Right cardiac atrium (tissue), 5 donors: ENCODE measurements at regions of chr14 and their contacts with region 1.

Region 1: GRCh38 chr14:67140556-67140955 is 48.7 kb upstream of the GARIN2 start:
- DNase-seq: no peak
- ATAC-seq: no peak
- H3K4me3 ChIP-seq: no peak overlapping the region
- H3K27ac ChIP-seq: no peak overlapping the region
- H3K4me1 ChIP-seq: no peaks in the 10 kb centered on the region
- H3K27me3 ChIP-seq: no peaks in the 10 kb centered on the region

Region 2: GRCh38 chr14:65255536-65256461 is 1884.8 kb before region 1 on chr14:
- intact Hi-C with region 1: no loop called
- DNase-seq: no peak
- ATAC-seq: no peak
- H3K4me3 ChIP-seq: no peak overlapping the region
- H3K27ac ChIP-seq: no peak overlapping the region
- H3K4me1 ChIP-seq: no peaks in the 10 kb centered on the region
- H3K27me3 ChIP-seq: no peaks in the 10 kb centered on the region

Region 3: DNA sequence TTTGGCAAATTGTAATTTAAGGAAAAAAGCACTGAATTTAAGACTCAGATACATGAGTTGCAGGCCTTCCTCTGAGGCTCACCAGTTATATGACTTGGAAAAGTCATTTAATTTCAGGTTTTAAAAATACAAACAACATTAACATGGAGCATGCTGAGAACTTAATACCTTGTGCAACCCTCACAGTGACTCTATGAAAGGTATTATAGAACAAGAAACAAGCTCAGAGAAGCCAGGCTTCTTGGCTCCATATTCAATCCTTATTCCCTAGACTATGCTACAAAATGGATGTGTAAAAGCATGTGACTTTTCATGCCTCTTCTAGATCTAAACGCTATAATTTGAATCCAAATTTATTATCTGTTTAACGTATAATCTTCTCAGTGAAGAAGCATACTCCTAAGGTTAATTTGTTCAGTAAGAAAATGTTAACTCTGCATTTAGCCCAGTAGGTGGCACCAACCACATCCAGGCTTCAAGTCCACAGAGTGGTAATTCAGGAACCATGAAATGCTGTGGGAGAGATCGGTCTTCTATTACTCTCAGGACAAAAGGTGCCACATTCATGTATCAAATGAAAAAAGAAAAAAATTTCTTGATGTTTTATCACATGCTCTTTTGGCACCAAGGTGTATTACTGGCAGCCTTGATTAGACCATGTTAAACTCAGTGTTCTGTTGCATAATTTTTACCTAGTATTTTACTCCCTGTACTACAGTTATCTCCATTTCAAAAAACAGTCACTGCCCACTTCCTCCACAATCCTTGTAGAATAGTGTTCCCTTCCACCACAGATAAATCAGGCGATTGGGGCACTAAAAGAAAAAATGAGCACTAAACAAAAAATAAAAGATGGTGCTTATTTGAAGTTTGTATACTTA is 645.1 kb before region 1 on chr14:
- intact Hi-C with region 1: loop called in 1 of 4 experiments (anchors 10 kb)
- DNase-seq: no peak
- ATAC-seq: peak; percentile 88 to 94
- H3K4me3 ChIP-seq: peak overlapping the region; percentile 7
- H3K27ac ChIP-seq: no peak overlapping the region
- H3K4me1 ChIP-seq: no peaks in the 10 kb centered on the region
- H3K27me3 ChIP-seq: no peaks in the 10 kb centered on the region